ENCODE measurements at regions of chr19 and their contacts with region 1.

Region 1: GRCh38 chr19:46661020-46661731 is at the start of gene DACT3:
- DNase-seq: peak; percentile 97
- ATAC-seq: peak; percentile 95
- H3K4me3 ChIP-seq: peak within 1 kb of the TSS; percentile 66
- H3K27ac ChIP-seq: no peak within 1 kb of the TSS
- H3K4me1 ChIP-seq: peaks cover 9% of the 10 kb centered on the region
- H3K27me3 ChIP-seq: no peaks in the 10 kb centered on the region
- CTCF ChIP-seq: no peak
- total RNA-seq, gene DACT3: 1.9 and 3.1 TPM in 2 replicates

Region 2: DNA sequence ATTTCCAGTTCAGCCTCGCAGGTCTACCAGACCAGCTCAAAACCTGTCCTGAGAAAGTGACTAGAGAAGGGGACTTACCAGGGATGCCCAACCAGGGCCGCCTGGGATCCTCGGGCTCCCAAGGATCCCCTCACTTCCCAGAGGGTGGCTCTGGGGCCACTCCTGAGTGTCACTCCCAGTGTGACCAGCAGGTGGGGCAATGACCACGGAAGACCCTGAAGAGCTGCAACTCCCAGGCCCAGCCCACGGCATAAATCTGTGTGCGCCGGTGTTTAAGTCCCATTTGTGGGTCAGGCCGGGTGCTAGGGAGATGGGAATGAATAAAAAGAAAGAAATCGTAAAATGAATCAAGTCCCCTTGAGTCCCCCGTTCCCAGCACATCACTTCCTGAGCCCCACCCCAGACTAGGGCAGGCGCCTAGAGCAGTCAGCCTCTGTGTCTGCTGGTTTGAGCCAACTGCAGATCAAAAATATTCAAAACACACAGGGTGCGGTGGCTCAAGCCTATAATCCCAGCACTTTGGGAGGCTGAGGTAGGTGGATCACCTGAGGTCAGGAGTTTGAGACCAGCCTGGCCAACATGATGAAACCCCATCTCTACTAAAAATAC is 47.0 kb before region 1 on chr19:
- CTCF ChIA-PET with region 1: interaction called, 16 read pairs
- POLR2A ChIA-PET with region 1: no interaction called
- intact Hi-C with region 1: loop called (anchors 1 kb)
- DNase-seq: peak; percentile 81
- ATAC-seq: peak; percentile 86
- H3K4me3 ChIP-seq: no peak overlapping the region
- H3K27ac ChIP-seq: no peak overlapping the region
- H3K4me1 ChIP-seq: no peaks in the 10 kb centered on the region
- H3K27me3 ChIP-seq: no peaks in the 10 kb centered on the region
- CTCF ChIP-seq: peak; percentile 84

Region 3: GRCh38 chr19:46717034-46717723 is 56.0 kb after region 1 on chr19 and contains the start of gene PRKD2:
- CTCF ChIA-PET with region 1: interaction called, 10 read pairs
- POLR2A ChIA-PET with region 1: no interaction called
- intact Hi-C with region 1: no loop called
- DNase-seq: peak; percentile 69
- ATAC-seq: peak; percentile 66
- H3K4me3 ChIP-seq: peak within 1 kb of the TSS; percentile 93
- H3K27ac ChIP-seq: no peak within 1 kb of the TSS
- H3K4me1 ChIP-seq: no peaks in the 10 kb centered on the region; the same call in 1 of the 2 replicates
- H3K27me3 ChIP-seq: no peaks in the 10 kb centered on the region
- CTCF ChIP-seq: no peak
- total RNA-seq, gene PRKD2: 24.1 and 32.9 TPM in 2 replicates

Region 4: DNA sequence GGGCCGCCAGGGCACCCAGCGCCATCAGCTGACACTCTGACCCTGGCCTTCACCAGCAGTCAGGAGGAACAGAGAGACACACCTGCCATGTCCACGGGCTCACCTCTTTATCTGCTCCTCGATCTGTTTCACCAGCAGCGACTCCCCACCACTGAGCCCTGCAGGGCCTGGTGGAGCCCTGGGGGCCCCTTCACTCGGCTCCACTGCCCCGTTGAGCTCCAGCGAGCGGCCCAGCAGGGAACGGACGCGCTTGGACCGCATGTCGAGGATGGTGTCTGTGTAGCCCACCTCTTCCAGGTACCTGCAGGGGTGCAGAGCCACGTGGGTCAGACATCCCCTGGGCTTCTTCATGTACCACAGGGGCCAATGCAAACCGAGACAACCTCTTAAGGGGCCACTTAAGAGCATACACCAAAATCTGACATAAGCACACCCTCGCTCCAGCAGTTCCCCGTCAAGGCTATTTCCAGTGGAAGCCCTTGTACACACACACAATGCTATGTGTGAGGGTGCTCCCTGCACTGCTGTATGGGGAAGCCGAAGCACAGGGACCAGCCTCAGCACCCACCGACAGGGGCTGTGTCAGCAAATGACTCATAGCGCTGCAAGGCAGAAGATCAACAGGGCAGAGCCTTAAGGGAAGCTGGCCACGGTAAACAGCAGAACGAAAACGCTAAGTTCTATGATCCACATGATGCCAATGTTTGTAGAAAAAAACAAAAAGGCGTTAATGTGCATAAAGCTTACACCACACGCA is 71.9 kb after region 1 on chr19:
- CTCF ChIA-PET with region 1: no interaction called
- POLR2A ChIA-PET with region 1: no interaction called
- intact Hi-C with region 1: no loop called
- DNase-seq: peak; percentile 67
- ATAC-seq: peak; percentile 69
- H3K4me3 ChIP-seq: 0 out of 2 replicates have a peak overlapping the region, but pooled peaks have one; percentile 21
- H3K27ac ChIP-seq: peak overlapping the region; percentile 38; the same call in 1 of the 2 replicates
- H3K4me1 ChIP-seq: peaks cover 43% of the 10 kb centered on the region
- H3K27me3 ChIP-seq: no peaks in the 10 kb centered on the region
- CTCF ChIP-seq: no peak

Region 5: DNA sequence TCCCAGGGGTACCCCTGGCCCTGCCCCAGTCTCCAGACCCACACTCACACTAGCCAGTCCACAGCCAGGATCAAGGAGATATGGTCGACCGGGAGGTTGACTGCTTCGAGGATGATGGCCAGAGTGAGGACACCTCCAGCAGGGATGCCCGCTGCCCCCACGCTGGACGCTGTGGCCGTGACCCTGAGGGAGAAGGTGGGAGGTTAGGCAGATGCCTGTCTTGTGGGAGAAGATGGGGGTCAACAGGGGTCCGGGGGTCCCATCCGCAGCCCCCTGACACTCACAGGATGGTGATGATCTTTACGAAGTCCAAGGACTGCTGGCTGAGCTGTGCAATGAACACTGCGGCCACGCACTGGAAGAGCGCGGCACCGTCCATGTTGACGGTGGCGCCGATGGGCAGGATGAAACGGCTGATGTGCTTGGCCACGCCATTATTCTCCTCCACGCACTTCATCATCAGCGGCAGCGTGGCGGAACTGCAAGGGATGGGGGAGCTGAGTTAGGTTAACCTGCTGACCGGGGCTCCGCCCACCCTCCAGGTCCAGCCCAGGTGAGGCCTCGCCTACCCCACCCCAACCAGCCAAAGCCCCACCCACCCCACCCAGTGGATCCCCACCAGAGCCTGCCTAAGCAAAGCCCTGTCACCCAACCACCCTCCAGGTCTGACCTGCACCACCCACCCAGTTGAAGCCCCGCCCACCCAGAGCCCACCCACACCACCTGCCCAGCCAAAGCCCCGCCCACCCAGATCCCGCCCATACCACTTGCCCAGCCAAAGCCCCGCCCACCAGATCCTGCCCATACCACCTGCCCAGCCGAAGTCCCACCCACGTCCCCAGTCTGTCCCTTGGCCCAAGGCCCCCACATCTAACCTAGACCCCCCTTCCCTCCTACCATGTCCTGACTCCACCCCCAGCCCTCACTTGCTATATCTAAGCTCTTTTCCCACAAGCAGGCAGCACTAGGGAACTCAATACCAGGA is 116.0 kb after region 1 on chr19:
- CTCF ChIA-PET with region 1: no interaction called
- POLR2A ChIA-PET with region 1: no interaction called
- intact Hi-C with region 1: no loop called
- DNase-seq: no peak
- ATAC-seq: no peak
- H3K4me3 ChIP-seq: no peak overlapping the region
- H3K27ac ChIP-seq: no peak overlapping the region
- H3K4me1 ChIP-seq: no peaks in the 10 kb centered on the region
- H3K27me3 ChIP-seq: no peaks in the 10 kb centered on the region
- CTCF ChIP-seq: no peak

Measured in PC-3 (cell line).